ENCODE measurements at regions of chr3 and their contacts with region 1.

Region 1: GRCh38 chr3:189334064-189334920 is 162.5 kb downstream of the TPRG1 start:
- DNase-seq: no peak
- H3K4me3 Mint-ChIP-seq: no peak overlapping the region
- H3K27ac Mint-ChIP-seq: no peak overlapping the region
- H3K4me1 Mint-ChIP-seq: peaks cover 39% of the 10 kb centered on the region
- H3K27me3 Mint-ChIP-seq: no peaks in the 10 kb centered on the region

Region 2: GRCh38 chr3:189277711-189278110 is 56.6 kb before region 1 on chr3:
- intact Hi-C with region 1: no loop called
- DNase-seq: no peak
- H3K4me3 Mint-ChIP-seq: no peak overlapping the region
- H3K27ac Mint-ChIP-seq: no peak overlapping the region
- H3K4me1 Mint-ChIP-seq: peaks cover 38% of the 10 kb centered on the region
- H3K27me3 Mint-ChIP-seq: no peaks in the 10 kb centered on the region

Region 3: DNA sequence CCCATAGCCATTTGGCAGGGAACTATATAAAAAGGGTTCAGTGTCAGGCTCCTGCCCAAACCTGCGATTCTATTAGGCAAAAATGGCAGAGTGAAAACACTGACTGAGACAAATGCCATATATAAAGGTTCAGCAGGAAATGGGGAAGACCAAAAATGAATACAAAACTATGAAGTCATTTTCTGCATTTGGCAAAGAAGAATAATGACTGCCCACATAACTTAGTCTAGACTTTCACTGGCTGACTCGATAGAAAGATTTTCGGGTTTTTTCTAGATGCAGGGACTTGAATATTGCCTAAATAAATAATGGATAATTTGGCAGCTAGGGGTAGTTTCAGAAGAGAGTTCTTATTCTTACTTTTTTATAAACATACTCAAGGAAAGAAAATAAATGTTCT is 15.5 kb after region 1 on chr3:
- intact Hi-C with region 1: loop called (anchors 2 kb)
- DNase-seq: no peak
- H3K4me3 Mint-ChIP-seq: no peak overlapping the region
- H3K27ac Mint-ChIP-seq: no peak overlapping the region
- H3K4me1 Mint-ChIP-seq: peaks cover 9% of the 10 kb centered on the region
- H3K27me3 Mint-ChIP-seq: no peaks in the 10 kb centered on the region